Heart right ventricle (tissue), 16 donors: ENCODE measurements at regions of chr10 and their contacts with region 1.

Region 1: DNA sequence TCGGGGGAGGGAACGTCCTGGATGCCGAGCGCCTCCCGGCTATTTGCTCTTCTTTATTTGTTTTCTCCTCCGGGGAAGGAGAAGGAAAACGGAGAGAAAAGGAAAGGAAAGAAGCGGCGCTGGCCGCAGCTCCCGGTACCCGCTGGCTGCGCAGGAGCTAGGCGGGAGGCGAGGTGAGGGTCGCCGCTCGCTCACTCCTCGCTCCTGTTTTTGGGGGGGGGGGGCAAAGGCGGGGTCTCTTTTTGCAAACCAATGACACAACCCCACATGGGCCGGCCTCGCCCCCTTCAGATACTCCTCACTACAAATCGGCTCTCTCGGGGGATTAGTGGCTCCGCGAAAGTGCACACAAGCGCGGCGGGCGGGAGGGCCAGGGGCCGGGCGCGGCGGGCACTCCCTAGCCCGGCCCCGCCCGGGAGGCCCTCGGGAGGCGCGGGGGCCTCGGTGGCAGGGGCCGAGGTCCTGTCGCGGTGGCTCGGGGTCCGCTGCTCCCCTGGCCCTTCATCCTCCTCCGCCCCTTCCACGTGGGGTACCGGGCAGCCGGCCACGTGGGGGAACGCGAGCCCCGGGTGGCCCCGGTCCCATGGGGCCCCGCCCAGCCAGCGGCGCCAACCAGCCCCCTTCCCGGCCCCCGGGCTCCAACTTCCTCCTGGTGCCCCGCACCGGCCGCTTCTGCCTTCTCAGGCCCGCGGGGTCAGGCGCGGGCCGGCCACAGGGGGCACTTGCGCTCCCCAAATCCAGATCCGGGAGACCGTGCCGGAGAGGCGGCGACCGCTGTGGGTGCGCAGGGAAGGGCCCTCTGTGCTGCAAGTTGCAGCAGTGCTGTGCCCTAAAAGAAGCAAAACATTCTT is 718 bp upstream of the CTBP2 start:
- DNase-seq: peak; percentile 80 to 85
- ATAC-seq: peak; percentile 62 to 85 (median 73)
- H3K4me3 ChIP-seq: peak overlapping the region; percentile 46 to 98 (median 88)
- H3K27ac ChIP-seq: peak overlapping the region; percentile 63 to 99 (median 98)
- H3K4me1 ChIP-seq: peaks cover 7 to 35% (median 31%) of the 10 kb centered on the region in 9 donors
- H3K27me3 ChIP-seq: peaks cover 0 to 13% (median 0%) of the 10 kb centered on the region in 7 donors
- CTCF ChIP-seq: peak; percentile 25 to 71 (median 56)

Region 2: GRCh38 chr10:124145109-124145870 is 1015.8 kb before region 1 on chr10:
- intact Hi-C with region 1: no loop called
- DNase-seq: peak; percentile 39 to 54
- ATAC-seq: peak; percentile 72 to 92 (median 83)
- H3K4me3 ChIP-seq: no peak overlapping the region
- H3K27ac ChIP-seq: peak overlapping the region in 3 of 10 donors; percentile 1 to 88 (median 55)
- H3K4me1 ChIP-seq: peaks cover 0 to 80% (median 18%) of the 10 kb centered on the region in 9 donors
- H3K27me3 ChIP-seq: no peaks in the 10 kb centered on the region
- CTCF ChIP-seq: no peak

Region 3: DNA sequence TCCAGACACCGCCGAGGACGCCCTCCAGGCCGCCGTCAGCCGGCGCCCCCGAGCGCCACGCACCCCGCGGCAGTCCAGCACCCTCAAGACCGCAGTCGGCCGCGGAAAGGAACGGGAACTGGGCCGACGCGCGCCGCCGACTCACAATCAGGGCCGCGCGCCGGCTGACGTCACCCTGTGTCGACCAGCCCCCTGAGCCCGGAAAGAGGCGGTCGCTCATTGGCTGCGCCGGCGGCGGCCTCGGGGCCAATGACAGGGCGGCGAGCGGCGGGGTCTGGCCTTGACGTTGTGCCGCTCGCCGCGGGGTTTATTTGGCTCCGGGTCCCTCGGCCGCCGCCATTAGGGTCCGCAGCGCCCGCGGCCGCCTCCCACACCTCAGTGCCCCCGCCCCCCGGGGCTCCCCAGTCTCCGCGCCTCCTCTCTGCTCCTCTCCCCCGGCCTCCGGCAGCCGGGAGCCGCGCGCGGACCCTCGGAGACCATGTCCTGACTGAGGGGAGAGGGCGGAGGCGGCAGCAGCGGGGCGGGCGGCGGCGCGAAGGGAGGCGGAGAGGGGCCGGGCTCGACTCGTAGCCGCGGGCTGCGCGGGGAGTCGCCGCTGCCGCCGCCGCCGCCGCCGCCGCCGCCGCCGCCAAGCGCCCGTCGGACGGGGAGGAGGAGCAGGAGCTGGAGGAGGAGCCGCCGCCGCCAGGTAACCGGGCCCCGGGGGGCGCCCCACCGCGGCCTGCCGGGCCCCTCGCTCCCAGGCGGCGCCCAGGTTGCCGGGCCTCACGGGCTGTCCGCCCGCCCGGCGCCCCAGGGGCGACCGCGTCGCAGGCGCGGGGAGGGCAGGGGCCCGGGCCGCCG is 244.3 kb before region 1 on chr10:
- intact Hi-C with region 1: loop called in 5 of 10 experiments (anchors 5 to 10 kb)
- DNase-seq: peak; percentile 98 to 99
- ATAC-seq: peak; percentile 98 to 99 (median 99)
- H3K4me3 ChIP-seq: peak overlapping the region; percentile 74 to 92 (median 86)
- H3K27ac ChIP-seq: peak overlapping the region; percentile 86 to 99 (median 96)
- H3K4me1 ChIP-seq: peaks cover 7 to 55% (median 46%) of the 10 kb centered on the region in 9 donors
- H3K27me3 ChIP-seq: no peaks in the 10 kb centered on the region
- CTCF ChIP-seq: peak in 1 of 9 donors; percentile 4

Region 4: GRCh38 chr10:125000366-125001312 is 160.4 kb before region 1 on chr10:
- intact Hi-C with region 1: loop called in 3 of 10 experiments (anchors 5 to 10 kb)
- DNase-seq: peak in 1 of 2 donors; percentile 18
- ATAC-seq: peak in 6 of 8 donors; percentile 23 to 60 (median 36)
- H3K4me3 ChIP-seq: no peak overlapping the region
- H3K27ac ChIP-seq: peak overlapping the region in 9 of 10 donors; percentile 12 to 81 (median 71)
- H3K4me1 ChIP-seq: peaks cover 30 to 56% (median 42%) of the 10 kb centered on the region in 9 donors
- H3K27me3 ChIP-seq: no peaks in the 10 kb centered on the region
- CTCF ChIP-seq: peak in 6 of 9 donors; percentile 5 to 45 (median 28)

Region 5: GRCh38 chr10:125060826-125061556 is 100.1 kb before region 1 on chr10:
- intact Hi-C with region 1: loop called in 7 of 10 experiments (anchors 2 to 5 kb)
- DNase-seq: peak; percentile 84 to 86
- ATAC-seq: peak; percentile 51 to 77 (median 68)
- H3K4me3 ChIP-seq: peak overlapping the region in 7 of 10 donors; percentile 4 to 36 (median 29)
- H3K27ac ChIP-seq: peak overlapping the region; percentile 2 to 92 (median 70)
- H3K4me1 ChIP-seq: peaks cover 65 to 100% (median 100%) of the 10 kb centered on the region in 9 donors
- H3K27me3 ChIP-seq: no peaks in the 10 kb centered on the region
- CTCF ChIP-seq: peak; percentile 73 to 94 (median 84)

Region 6: GRCh38 chr10:125118011-125118611 is 43.0 kb before region 1 on chr10:
- intact Hi-C with region 1: loop called in 3 of 10 experiments (anchors 2 to 5 kb)
- DNase-seq: no peak
- ATAC-seq: peak; percentile 4 to 45 (median 20)
- H3K4me3 ChIP-seq: no peak overlapping the region
- H3K27ac ChIP-seq: peak overlapping the region in 9 of 10 donors; percentile 18 to 74 (median 61)
- H3K4me1 ChIP-seq: peaks cover 35 to 99% (median 82%) of the 10 kb centered on the region in 9 donors
- H3K27me3 ChIP-seq: no peaks in the 10 kb centered on the region
- CTCF ChIP-seq: no peak

Region 7: GRCh38 chr10:125337510-125337909 is 176.4 kb after region 1 on chr10:
- intact Hi-C with region 1: loop called in 7 of 10 experiments (anchors 5 kb)
- DNase-seq: no peak
- ATAC-seq: no peak
- H3K4me3 ChIP-seq: no peak overlapping the region
- H3K27ac ChIP-seq: no peak overlapping the region
- H3K4me1 ChIP-seq: peaks cover 0 to 17% (median 0%) of the 10 kb centered on the region in 9 donors
- H3K27me3 ChIP-seq: no peaks in the 10 kb centered on the region
- CTCF ChIP-seq: no peak

Region 8: GRCh38 chr10:125368146-125368545 is 207.1 kb after region 1 on chr10:
- intact Hi-C with region 1: loop called in 1 of 10 experiments (anchors 10 kb)
- DNase-seq: no peak
- ATAC-seq: no peak
- H3K4me3 ChIP-seq: no peak overlapping the region
- H3K27ac ChIP-seq: no peak overlapping the region
- H3K4me1 ChIP-seq: no peaks in the 10 kb centered on the region
- H3K27me3 ChIP-seq: peaks cover 0 to 17% (median 10%) of the 10 kb centered on the region in 7 donors
- CTCF ChIP-seq: no peak